Esophagus muscularis mucosa (tissue), 4 donors: ENCODE measurements at regions of chr1 and their contacts with region 1.

Region 1: GRCh38 chr1:147494998-147495580 is 46.2 kb upstream of the BCL9 start:
- DNase-seq: no peak
- H3K4me3 ChIP-seq: no peak overlapping the region
- H3K27ac ChIP-seq: no peak overlapping the region
- H3K4me1 ChIP-seq: peaks cover 8 to 22% (median 20%) of the 10 kb centered on the region in 4 donors
- H3K27me3 ChIP-seq: no peaks in the 10 kb centered on the region
- CTCF ChIP-seq: peak; percentile 91 to 93 (median 92)
- EP300 ChIP-seq: no peak
- POLR2A ChIP-seq: no peak

Region 2: DNA sequence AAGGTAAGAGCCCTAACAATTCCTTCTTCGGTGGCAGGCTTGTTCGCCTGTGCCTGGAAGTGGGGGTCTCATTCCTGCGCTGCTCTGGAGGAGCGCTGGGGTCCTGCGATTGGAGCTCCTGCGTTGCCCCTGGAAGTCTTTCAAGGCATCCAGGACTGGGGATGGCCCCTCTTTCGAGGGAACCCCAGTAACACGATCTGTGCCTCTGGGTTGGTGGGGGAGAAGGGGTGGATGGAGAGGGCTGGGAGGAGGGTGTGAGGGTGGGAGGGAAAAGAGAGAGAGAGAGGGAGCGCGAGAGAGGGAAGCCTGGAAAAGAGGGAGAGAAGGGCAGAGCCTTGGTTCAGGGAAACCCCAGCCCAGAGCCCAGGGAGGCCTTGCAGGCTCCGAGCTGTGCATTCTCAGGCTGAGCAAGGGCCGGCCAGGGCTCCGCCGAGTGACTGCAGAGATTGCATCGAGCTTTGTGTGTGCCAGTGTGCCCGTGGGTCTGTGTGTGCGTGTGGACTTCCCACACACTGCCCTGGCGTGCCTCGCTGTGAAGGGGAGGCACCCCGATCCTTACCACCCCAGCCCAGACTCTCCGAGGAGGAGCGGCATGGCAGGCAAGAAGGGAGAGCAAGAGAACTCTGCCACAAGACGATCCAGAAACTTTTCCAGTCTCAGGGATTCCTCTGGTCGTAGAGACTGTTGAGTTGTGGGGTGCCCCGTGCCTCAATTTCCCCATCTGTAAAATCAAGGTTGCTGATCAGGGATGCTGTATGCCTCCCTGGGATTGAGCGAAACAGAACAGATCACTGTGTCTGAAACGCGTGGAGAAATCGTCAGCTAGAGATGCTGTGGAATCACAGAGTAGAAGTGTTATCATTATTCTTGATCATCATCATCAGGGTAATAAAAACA is 46.8 kb after region 1 on chr1:
- intact Hi-C with region 1: loop called (anchors 5 kb)
- DNase-seq: no peak
- H3K4me3 ChIP-seq: peak overlapping the region; percentile 67 to 74 (median 70)
- H3K27ac ChIP-seq: peak overlapping the region; percentile 88 to 95 (median 94)
- H3K4me1 ChIP-seq: peaks cover 38 to 78% (median 70%) of the 10 kb centered on the region in 4 donors
- H3K27me3 ChIP-seq: no peaks in the 10 kb centered on the region
- CTCF ChIP-seq: no peak
- EP300 ChIP-seq: no peak
- POLR2A ChIP-seq: no peak

Region 3: GRCh38 chr1:147627435-147628110 is 132.5 kb after region 1 on chr1:
- intact Hi-C with region 1: loop called (anchors 2 kb)
- DNase-seq: no peak
- H3K4me3 ChIP-seq: no peak overlapping the region
- H3K27ac ChIP-seq: no peak overlapping the region
- H3K4me1 ChIP-seq: peaks cover 0 to 11% (median 6%) of the 10 kb centered on the region in 4 donors
- H3K27me3 ChIP-seq: no peaks in the 10 kb centered on the region
- CTCF ChIP-seq: peak; percentile 82 to 92 (median 91)
- EP300 ChIP-seq: no peak
- POLR2A ChIP-seq: no peak

Region 4: GRCh38 chr1:147640553-147641165 is 145.6 kb after region 1 on chr1:
- intact Hi-C with region 1: loop called (anchors 2 kb)
- DNase-seq: no peak
- H3K4me3 ChIP-seq: no peak overlapping the region
- H3K27ac ChIP-seq: no peak overlapping the region
- H3K4me1 ChIP-seq: peaks cover 7 to 16% (median 12%) of the 10 kb centered on the region in 4 donors
- H3K27me3 ChIP-seq: no peaks in the 10 kb centered on the region
- CTCF ChIP-seq: peak; percentile 65 to 82 (median 70)
- EP300 ChIP-seq: no peak
- POLR2A ChIP-seq: no peak

Region 5: DNA sequence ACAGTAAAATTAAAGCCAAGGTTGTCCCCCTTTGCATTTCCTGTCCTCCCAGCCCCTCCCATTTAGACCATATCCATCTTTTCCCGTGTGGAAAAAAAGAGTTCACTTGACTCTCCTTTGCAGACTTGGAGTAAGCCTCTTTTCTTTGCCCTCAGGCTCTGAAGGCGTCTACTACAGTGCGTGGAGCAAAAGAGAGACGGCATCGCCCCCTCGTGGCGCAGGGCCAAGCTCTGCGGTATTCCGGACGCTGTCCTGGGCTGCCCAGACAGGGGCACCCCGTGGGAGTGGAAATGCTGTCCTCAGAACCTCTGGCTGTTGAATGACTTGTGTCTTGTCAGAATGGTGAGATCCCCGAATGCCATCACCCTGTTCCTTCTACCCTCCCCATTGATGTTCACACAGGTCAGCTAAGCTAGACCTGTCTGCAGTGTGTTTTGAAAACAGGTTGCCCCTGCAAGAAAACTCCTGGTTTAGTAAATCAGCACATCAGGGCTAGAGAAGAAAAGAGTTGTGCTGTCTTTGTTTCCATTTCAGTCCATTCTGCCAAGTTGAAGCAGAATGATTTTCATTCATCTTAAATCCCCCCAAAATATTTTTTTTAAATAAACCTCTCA is 395.2 kb after region 1 on chr1:
- intact Hi-C with region 1: loop called (anchors 5 kb)
- DNase-seq: peak; percentile 92
- H3K4me3 ChIP-seq: no peak overlapping the region
- H3K27ac ChIP-seq: no peak overlapping the region
- H3K4me1 ChIP-seq: peaks cover 4 to 11% (median 6%) of the 10 kb centered on the region in 4 donors
- H3K27me3 ChIP-seq: no peaks in the 10 kb centered on the region
- CTCF ChIP-seq: peak; percentile 45 to 58 (median 57)
- EP300 ChIP-seq: no peak
- POLR2A ChIP-seq: no peak